Caco-2 (cell line): ENCODE measurements at regions of chr5 and their contacts with region 1.

Region 1: GRCh38 chr5:174935854-174936474 is 211.6 kb downstream of the MSX2 start:
- DNase-seq: peak; percentile 70 to 80
- H3K4me3 ChIP-seq: no peak overlapping the region
- H3K4me3 Mint-ChIP-seq: no peak overlapping the region
- H3K27ac Mint-ChIP-seq: no peak overlapping the region
- H3K4me1 ChIP-seq: no peaks in the 10 kb centered on the region
- H3K4me1 Mint-ChIP-seq: no peaks in the 10 kb centered on the region
- H3K27me3 ChIP-seq: no peaks in the 10 kb centered on the region; the same call in none of the 2 replicates
- H3K27me3 Mint-ChIP-seq: peaks cover 18% of the 10 kb centered on the region
- CTCF ChIP-seq: peak; percentile 89 to 95

Region 2: GRCh38 chr5:174837919-174838902 is 97.8 kb before region 1 on chr5:
- CTCF ChIA-PET with region 1: no interaction called
- POLR2A ChIA-PET with region 1: no interaction called
- intact Hi-C with region 1: loop called (anchors 1 kb)
- DNase-seq: no peak
- H3K4me3 ChIP-seq: no peak overlapping the region
- H3K4me3 Mint-ChIP-seq: no peak overlapping the region
- H3K27ac Mint-ChIP-seq: no peak overlapping the region
- H3K4me1 ChIP-seq: no peaks in the 10 kb centered on the region
- H3K4me1 Mint-ChIP-seq: no peaks in the 10 kb centered on the region
- H3K27me3 ChIP-seq: no peaks in the 10 kb centered on the region
- H3K27me3 Mint-ChIP-seq: peaks cover 14% of the 10 kb centered on the region
- CTCF ChIP-seq: peak in 1 of 2 experiments; percentile 15

Region 3: GRCh38 chr5:174903172-174903733 is 32.7 kb before region 1 on chr5:
- CTCF ChIA-PET with region 1: no interaction called
- POLR2A ChIA-PET with region 1: no interaction called
- intact Hi-C with region 1: loop called (anchors 5 kb)
- DNase-seq: no peak
- H3K4me3 ChIP-seq: no peak overlapping the region
- H3K4me3 Mint-ChIP-seq: no peak overlapping the region
- H3K27ac Mint-ChIP-seq: no peak overlapping the region
- H3K4me1 ChIP-seq: no peaks in the 10 kb centered on the region
- H3K4me1 Mint-ChIP-seq: no peaks in the 10 kb centered on the region
- H3K27me3 ChIP-seq: no peaks in the 10 kb centered on the region; the same call in 1 of the 2 replicates
- H3K27me3 Mint-ChIP-seq: peaks cover 16% of the 10 kb centered on the region
- CTCF ChIP-seq: peak in 1 of 2 experiments; percentile 10

Region 4: GRCh38 chr5:174910245-174910737 is 25.7 kb before region 1 on chr5:
- CTCF ChIA-PET with region 1: interaction called, 4 read pairs
- POLR2A ChIA-PET with region 1: no interaction called
- intact Hi-C with region 1: loop called (anchors 1 kb)
- DNase-seq: peak; percentile 70 to 84
- H3K4me3 ChIP-seq: no peak overlapping the region
- H3K4me3 Mint-ChIP-seq: peak overlapping the region; percentile 41
- H3K27ac Mint-ChIP-seq: no peak overlapping the region
- H3K4me1 ChIP-seq: no peaks in the 10 kb centered on the region
- H3K4me1 Mint-ChIP-seq: peaks cover 6% of the 10 kb centered on the region
- H3K27me3 ChIP-seq: no peaks in the 10 kb centered on the region; the same call in 1 of the 2 replicates
- H3K27me3 Mint-ChIP-seq: peaks cover 28% of the 10 kb centered on the region
- CTCF ChIP-seq: peak; percentile 93